ENCODE measurements at regions of chr2 and their contacts with region 1.

Region 1: DNA sequence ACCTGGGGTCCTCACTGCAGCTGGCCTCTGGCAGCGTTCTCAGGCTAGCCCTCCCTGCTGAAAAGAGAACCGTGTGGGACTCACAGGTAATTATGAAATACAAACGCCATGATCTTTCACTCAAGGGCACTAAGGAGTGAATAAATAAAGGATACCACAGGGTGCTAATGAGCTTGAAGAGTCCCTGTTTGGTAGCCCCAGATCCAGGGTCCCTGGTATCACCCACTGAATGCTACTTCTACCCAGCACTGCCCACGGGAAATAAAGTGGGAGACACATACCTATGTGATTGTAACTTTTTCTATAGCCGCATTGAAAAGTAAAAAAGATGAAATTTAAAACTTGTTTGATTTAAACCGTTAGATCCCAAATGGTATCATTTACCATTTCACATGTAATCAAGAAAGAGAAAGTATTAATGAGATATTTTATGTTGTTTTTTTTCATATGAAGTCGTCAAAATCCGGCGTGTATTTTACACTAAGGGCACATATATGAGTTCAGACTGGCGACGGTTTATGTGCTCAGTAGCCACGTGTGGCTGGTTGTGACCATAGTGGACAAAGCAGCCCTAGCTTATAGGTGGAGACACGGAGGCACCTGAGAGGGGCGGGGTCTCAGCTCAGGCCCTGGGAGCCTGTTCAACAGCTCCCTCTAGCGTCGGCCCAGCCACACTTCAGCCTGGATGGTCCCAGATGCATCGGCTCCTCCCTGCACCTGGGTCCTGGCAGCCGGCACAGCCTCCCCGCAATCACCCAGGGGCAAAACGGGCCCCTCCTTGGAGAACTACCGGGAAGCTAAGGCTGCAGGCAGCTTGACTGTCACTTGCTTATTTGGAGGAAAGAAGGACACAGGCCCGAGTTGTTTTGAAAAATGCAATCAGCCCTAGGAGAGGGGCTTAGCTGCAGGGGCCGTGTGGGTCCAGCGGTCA is 39.2 kb downstream of the ODC1 start:
- DNase-seq: peak; percentile 71
- ATAC-seq: peak; percentile 84
- H3K4me3 ChIP-seq: peak overlapping the region; percentile 58; the same call in 1 of the 2 replicates
- H3K27ac ChIP-seq: peak overlapping the region; percentile 84
- H3K4me1 ChIP-seq: peaks cover 44% of the 10 kb centered on the region
- H3K27me3 ChIP-seq: no peaks in the 10 kb centered on the region
- CTCF ChIP-seq: peak; percentile 95 to 99 (median 99); a peak in 5 of 6 replicates
- EP300 ChIP-seq: no peak; a peak in 1 of 4 replicates
- POLR2A ChIP-seq: no peak
- RAD21 ChIP-seq: peak; percentile 87

Region 2: GRCh38 chr2:10091182-10091888 is 317.6 kb before region 1 on chr2:
- CTCF ChIA-PET with region 1: interaction called, 9 read pairs
- POLR2A ChIA-PET with region 1: interaction called, 3 read pairs
- RAD21 ChIA-PET with region 1: interaction called, 20 read pairs
- SMC1A ChIA-PET with region 1: interaction called, 19 read pairs
- in situ Hi-C with region 1: no loop called
- intact Hi-C with region 1: no loop called
- DNase-seq: no peak
- ATAC-seq: peak; percentile 71
- H3K4me3 ChIP-seq: no peak overlapping the region; the same call in 1 of the 2 replicates
- H3K27ac ChIP-seq: no peak overlapping the region
- H3K4me1 ChIP-seq: peaks cover 18% of the 10 kb centered on the region
- H3K27me3 ChIP-seq: no peaks in the 10 kb centered on the region
- CTCF ChIP-seq: peak in 1 of 3 experiments; percentile 29; a peak in 1 of 6 replicates
- EP300 ChIP-seq: no peak
- POLR2A ChIP-seq: no peak
- RAD21 ChIP-seq: no peak

Region 3: DNA sequence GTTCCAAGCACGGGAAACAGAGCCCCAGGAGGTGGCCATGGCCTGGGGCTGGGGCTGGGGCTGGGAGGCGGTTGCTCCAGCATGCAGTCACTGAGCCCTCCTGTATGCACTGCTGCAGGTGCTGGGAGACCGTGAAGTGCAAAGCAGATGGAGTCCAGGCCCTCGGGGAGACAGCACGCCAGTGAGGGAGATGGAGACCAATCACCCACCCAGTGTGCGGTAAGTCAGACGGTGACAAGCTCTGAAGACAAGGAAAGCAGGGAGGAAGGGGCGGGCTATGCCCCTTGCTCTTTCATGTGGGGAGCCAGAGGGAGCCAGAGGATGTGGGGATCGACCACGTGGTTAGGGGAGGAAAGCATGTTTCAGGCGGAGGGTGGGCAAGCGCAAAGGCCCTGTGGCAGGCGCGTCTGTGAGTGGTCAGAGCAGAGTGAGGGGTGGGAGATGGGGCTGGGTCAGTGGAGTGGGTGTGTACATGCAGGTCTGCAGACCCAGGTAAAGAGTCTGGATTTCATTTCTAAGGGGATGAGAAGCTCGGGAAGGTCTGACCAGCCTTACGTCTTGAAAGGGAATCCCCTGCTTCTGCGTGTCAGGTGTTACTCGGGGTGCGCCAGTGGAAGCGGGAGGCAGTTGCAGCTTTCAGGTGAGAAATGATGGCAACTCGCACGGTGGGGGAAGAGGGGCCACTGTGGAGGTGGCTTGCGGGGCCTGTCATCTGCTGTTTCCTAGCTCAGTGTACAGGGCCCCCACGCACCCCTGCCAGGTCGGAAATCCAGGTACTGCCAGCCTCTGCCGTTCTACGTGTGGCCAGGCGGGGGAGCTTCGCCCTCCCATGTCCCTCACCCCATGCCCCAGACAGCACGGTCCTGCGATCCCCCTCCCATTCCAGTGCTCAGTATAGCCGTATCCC is 266.9 kb before region 1 on chr2:
- CTCF ChIA-PET with region 1: interaction called, 63 read pairs
- POLR2A ChIA-PET with region 1: interaction called, 7 read pairs
- RAD21 ChIA-PET with region 1: interaction called, 24 read pairs
- SMC1A ChIA-PET with region 1: interaction called, 47 read pairs
- in situ Hi-C with region 1: no loop called
- intact Hi-C with region 1: loop called (anchors 1 kb)
- DNase-seq: no peak
- ATAC-seq: peak; percentile 88
- H3K4me3 ChIP-seq: no peak overlapping the region
- H3K27ac ChIP-seq: no peak overlapping the region
- H3K4me1 ChIP-seq: no peaks in the 10 kb centered on the region
- H3K27me3 ChIP-seq: no peaks in the 10 kb centered on the region
- CTCF ChIP-seq: peak; percentile 38 to 61 (median 49); a peak in 5 of 6 replicates
- EP300 ChIP-seq: no peak
- POLR2A ChIP-seq: no peak
- RAD21 ChIP-seq: peak; percentile 40

Region 4: DNA sequence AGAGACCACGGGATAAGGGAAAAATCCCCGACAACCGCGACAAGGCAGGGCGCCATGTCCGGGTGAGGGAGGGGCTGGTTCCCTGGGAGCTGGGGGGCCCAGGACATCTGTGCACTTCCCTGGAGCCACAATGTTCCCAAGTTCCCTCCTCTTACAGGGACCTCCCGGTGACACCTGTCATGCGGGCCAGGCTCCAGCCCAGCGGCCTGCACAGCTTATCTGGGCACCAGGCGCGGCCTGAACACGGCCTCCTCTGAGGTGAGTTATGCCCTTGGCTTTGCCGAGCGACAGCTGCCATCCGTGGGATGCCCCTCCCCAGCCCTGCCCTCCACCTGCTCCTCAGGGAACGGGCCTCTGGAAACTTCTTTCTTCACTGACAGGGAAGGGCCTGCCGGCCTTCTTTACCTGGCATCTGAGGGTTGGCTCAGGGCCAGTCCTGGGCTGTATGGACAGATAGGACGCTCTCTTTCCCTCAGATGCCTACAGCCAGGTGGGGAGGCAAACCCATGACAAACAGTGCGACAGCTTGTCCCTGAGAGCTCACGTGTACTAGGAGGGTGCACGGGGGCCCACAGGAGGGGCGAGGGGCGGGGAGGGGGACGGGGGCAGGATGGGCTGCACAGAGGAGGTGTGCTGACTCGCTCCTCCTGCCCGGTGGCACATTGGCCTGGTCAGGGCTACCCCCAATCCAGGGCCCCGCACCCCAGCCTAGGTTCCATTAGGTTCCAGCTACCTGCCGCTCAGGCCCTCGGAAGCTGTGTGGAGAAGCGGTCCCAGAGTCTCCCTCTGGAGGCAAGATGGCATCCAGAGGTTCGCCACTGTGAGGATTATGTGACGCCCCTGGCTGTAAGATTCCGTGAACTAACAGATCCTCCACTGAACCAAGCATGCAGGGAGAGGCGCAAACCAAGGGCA is 141.1 kb before region 1 on chr2:
- CTCF ChIA-PET with region 1: interaction called, 44 read pairs
- POLR2A ChIA-PET with region 1: no interaction called
- RAD21 ChIA-PET with region 1: interaction called, 49 read pairs
- SMC1A ChIA-PET with region 1: interaction called, 35 read pairs
- in situ Hi-C with region 1: no loop called
- intact Hi-C with region 1: loop called (anchors 1 kb)
- DNase-seq: no peak
- ATAC-seq: no peak
- H3K4me3 ChIP-seq: no peak overlapping the region
- H3K27ac ChIP-seq: no peak overlapping the region
- H3K4me1 ChIP-seq: no peaks in the 10 kb centered on the region
- H3K27me3 ChIP-seq: peaks cover 1 to 2% of the 10 kb centered on the region in 2 experiments; a peak in 1 of 4 replicates
- CTCF ChIP-seq: no peak
- EP300 ChIP-seq: no peak
- POLR2A ChIP-seq: no peak
- RAD21 ChIP-seq: no peak

Region 5: DNA sequence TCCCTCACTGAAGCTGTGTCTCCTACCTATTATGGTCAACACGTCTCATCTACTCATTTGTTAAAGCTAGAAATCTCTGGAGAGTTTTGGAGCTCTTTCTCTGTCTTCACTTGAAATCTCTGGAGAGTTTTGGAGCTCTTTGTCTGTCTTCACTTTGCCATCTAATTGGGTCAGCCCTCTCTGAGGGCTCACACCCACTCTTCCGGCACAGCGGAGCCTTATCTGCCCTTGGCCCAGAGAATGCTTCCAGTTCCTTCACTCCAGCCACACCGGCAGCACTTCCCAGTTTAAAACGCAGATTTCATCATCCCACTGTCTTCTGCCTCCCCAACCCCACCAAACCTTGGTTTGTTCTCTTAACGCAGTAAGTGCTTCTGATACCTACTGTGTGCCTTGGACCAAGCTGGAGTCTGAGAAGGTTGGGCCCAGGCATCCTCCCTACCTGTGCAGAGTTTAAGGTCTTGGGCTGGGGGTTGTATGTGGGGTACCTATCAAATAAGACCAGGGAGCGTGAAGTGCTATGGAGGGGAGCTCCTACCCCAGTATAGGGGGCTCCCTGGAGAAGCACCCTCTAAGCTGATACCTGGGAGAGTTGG is 101.3 kb before region 1 on chr2:
- CTCF ChIA-PET with region 1: interaction called, 87 read pairs
- POLR2A ChIA-PET with region 1: interaction called, 55 read pairs
- RAD21 ChIA-PET with region 1: interaction called, 154 read pairs
- SMC1A ChIA-PET with region 1: interaction called, 100 read pairs
- in situ Hi-C with region 1: no loop called
- intact Hi-C with region 1: loop called (anchors 1 kb)
- DNase-seq: no peak
- ATAC-seq: no peak
- H3K4me3 ChIP-seq: no peak overlapping the region
- H3K27ac ChIP-seq: no peak overlapping the region
- H3K4me1 ChIP-seq: peaks cover 5% of the 10 kb centered on the region
- H3K27me3 ChIP-seq: no peaks in the 10 kb centered on the region; a peak in 1 of 4 replicates
- CTCF ChIP-seq: no peak
- EP300 ChIP-seq: no peak
- POLR2A ChIP-seq: no peak
- RAD21 ChIP-seq: no peak

Region 6: GRCh38 chr2:10382354-10383061 is 26.4 kb before region 1 on chr2:
- CTCF ChIA-PET with region 1: interaction called, 41 read pairs
- POLR2A ChIA-PET with region 1: interaction called, 77 read pairs
- RAD21 ChIA-PET with region 1: interaction called, 129 read pairs
- SMC1A ChIA-PET with region 1: interaction called, 112 read pairs
- in situ Hi-C with region 1: no loop called
- intact Hi-C with region 1: loop called (anchors 2 kb)
- DNase-seq: peak; percentile 60
- ATAC-seq: peak; percentile 84
- H3K4me3 ChIP-seq: no peak overlapping the region
- H3K27ac ChIP-seq: no peak overlapping the region
- H3K4me1 ChIP-seq: peaks cover 29% of the 10 kb centered on the region
- H3K27me3 ChIP-seq: no peaks in the 10 kb centered on the region
- CTCF ChIP-seq: no peak
- EP300 ChIP-seq: no peak
- POLR2A ChIP-seq: no peak
- RAD21 ChIP-seq: no peak

Region 7: DNA sequence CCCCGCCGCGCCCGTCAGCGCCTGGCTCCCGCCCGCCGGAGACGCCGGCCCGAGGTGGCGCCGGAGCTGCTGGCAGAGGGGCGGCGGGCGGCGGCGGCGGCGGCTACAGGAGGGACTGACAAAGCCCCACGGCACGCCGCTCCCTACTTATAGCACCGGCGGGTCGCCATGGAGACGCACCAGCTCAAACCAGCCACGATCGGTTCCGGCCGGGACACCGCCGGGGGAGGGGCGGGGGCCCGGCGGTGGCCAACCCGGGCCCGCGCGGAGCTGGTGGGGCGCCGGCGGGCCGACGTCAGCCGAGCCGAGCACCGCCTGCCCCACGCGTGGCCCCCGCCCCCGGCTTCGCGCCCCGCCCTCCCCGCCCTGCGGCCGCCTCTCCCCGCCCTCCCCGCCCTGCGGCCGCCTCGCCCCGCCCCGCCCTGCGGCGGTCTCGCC is 39.3 kb after region 1 on chr2 and contains the start of gene ODC1:
- CTCF ChIA-PET with region 1: interaction called, 88 read pairs
- POLR2A ChIA-PET with region 1: interaction called, 60 read pairs
- RAD21 ChIA-PET with region 1: interaction called, 115 read pairs
- SMC1A ChIA-PET with region 1: interaction called, 76 read pairs
- in situ Hi-C with region 1: no loop called
- intact Hi-C with region 1: no loop called
- DNase-seq: peak; percentile 53
- ATAC-seq: peak; percentile 76
- H3K4me3 ChIP-seq: peak within 1 kb of the TSS; percentile 77
- H3K27ac ChIP-seq: peak within 1 kb of the TSS; percentile 93
- H3K4me1 ChIP-seq: peaks cover 25% of the 10 kb centered on the region
- H3K27me3 ChIP-seq: no peaks in the 10 kb centered on the region
- CTCF ChIP-seq: no peak
- EP300 ChIP-seq: no peak; a peak in 1 of 4 replicates
- POLR2A ChIP-seq: peak; percentile 87; the same call in 1 of the 2 replicates
- RAD21 ChIP-seq: no peak
- polyA plus RNA-seq, gene ODC1: 131 to 235 TPM

Region 8: DNA sequence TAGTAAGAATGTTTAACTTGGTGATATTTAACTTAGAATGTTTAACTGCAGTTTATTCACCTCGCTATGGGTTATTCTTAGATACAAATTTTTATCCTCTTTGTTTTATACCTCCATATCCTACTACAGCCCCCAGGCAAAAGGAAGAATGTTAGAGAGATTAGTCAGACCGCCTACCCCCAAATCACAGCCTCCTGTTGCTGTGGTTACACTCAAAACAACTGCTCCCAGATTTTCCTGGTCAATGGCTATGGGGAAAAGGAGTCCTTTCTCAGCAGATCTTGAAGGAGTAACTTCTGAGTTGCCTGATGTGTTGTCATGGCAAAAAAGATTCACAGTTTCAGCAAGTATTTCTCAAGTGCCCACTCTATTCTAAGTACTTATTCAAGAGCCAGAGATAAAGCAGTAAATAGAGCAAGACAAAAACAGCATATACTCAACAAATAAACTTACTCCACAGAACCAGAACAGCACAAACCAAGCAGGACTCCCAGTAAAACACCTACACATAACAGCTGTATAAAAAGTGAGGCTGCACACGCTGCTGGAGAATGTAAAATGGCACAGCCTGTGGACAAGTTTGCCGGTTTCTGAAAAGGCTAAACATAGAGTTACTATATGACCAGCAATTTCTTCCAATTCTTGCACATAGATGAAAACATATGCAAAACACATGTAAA is 176.0 kb after region 1 on chr2:
- CTCF ChIA-PET with region 1: no interaction called
- POLR2A ChIA-PET with region 1: no interaction called
- RAD21 ChIA-PET with region 1: no interaction called
- SMC1A ChIA-PET with region 1: no interaction called
- in situ Hi-C with region 1: no loop called
- intact Hi-C with region 1: no loop called
- DNase-seq: no peak
- ATAC-seq: no peak
- H3K4me3 ChIP-seq: no peak overlapping the region
- H3K27ac ChIP-seq: no peak overlapping the region
- H3K4me1 ChIP-seq: no peaks in the 10 kb centered on the region
- H3K27me3 ChIP-seq: no peaks in the 10 kb centered on the region
- CTCF ChIP-seq: no peak
- EP300 ChIP-seq: no peak
- POLR2A ChIP-seq: no peak
- RAD21 ChIP-seq: no peak